Aorta (tissue), 5 donors: ENCODE measurements at regions of chr12 and their contacts with region 1.

Region 1: DNA sequence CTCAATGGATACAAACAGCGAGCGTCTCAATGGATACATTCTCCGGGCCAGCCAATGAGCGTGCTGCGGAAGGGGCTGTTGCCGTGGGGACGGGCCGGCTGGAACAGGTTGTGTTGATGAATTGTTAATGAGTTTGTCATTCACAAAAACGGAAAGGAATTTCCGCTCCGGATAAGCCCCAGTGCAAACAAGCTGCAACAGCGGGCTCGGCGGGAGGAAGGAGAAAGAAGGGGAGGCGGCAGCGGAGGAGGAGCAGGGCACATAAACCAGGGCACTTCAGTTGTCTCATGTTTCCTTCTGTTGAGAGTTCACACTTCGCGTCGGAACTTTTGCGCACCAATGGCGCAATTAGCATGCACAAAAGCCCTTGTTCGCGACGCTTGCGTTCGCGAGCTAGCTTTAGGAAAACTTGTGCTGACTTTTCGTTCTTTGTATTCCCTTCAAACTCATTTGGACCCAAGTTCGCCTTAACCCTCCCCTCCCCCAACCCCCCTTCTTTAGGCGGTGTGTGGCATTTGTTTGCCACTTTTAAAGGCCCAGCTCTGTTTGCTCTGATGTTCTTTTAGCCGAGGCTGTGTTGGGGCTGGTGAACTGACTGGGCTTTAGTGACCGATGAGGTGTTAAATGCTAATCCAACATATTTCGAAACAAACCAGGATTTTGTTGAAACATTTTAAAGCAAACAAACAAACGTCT is at the start of gene DUSP6:
- DNase-seq: peak; percentile 97 to 98
- ATAC-seq: peak; percentile 89
- H3K4me3 ChIP-seq: peak within 1 kb of the TSS; percentile 58 to 99
- H3K27ac ChIP-seq: peak within 1 kb of the TSS; percentile 70 to 91
- H3K4me1 ChIP-seq: peaks cover 0 to 6% of the 10 kb centered on the region in 2 donors
- H3K27me3 ChIP-seq: no peaks in the 10 kb centered on the region
- total RNA-seq, gene DUSP6: 94.6 to 96.8 TPM

Region 2: DNA sequence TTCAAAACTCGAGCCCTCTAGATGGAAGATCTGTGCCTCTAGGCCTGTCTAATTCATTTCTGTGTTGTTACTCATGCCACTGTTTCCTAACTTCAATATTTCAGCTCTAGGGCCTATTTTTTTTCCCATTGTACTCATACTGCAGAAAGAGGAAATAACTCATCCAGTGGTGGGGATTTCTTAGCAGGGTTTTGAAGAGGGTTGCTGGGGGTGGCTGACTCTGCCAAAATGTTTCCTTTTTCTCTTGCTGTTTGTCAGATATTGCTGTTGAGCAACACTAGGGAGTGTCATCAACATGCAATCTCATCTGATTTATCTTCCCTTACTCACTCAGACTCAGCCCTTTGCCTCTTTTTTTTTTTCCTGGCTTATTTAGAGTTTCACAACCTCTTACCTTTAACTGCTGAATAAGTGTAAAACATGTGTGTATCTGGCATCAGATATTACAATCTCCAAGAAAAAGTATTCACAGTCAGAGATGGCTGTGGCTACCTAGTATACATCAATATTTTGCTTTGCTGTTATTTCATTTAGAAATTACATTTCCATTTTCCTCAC is 189.9 kb before region 1 on chr12:
- intact Hi-C with region 1: loop called (anchors 5 kb)
- DNase-seq: peak; percentile 72 to 81
- ATAC-seq: peak; percentile 89
- H3K4me3 ChIP-seq: no peak overlapping the region
- H3K27ac ChIP-seq: no peak overlapping the region
- H3K4me1 ChIP-seq: peaks cover 0 to 2% of the 10 kb centered on the region in 2 donors
- H3K27me3 ChIP-seq: no peaks in the 10 kb centered on the region

Region 3: GRCh38 chr12:89306827-89307473 is 45.7 kb before region 1 on chr12:
- intact Hi-C with region 1: loop called in 1 of 2 experiments (anchors 5 kb)
- DNase-seq: no peak
- ATAC-seq: no peak
- H3K4me3 ChIP-seq: no peak overlapping the region
- H3K27ac ChIP-seq: no peak overlapping the region
- H3K4me1 ChIP-seq: peaks cover 2 to 3% of the 10 kb centered on the region in 2 donors
- H3K27me3 ChIP-seq: no peaks in the 10 kb centered on the region

Region 4: DNA sequence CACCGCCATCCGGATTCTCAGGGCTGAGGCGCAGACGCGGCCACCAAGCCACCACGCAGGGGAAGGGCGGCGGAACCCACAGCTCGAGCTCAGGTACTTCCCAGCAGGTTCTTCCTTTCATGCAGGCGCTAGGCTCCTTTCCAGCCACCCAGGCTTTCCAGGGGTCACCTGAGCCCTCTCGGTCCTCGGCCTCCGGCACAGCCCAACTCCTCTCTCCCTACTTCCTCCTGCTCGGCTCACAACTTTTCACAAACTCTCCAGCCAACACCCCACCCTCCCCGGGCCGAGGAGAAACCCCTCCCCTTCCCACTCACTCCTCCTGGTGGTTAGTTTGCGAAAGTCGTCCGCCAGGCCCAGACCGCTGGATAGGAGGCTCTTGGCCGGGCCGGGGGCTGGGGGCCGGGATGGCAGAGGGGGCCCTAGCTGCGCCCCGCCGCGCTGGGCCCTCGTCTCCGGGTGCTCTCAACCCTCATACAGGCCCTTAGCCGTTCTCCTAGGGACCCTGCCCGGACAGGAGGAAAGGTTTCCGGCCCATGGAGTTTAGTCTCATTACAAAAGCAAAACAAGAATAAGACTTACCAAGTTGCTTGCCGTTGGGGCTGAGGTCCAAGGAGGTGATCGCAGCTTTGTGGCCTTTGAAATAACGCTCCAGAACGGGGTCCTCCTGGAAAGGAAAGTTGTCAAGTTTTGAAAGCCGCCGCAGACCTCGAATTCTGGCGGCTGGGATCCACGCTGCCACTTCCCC is 172.1 kb after region 1 on chr12 and contains the start of gene GALNT4:
- intact Hi-C with region 1: loop called (anchors 5 kb)
- DNase-seq: peak; percentile 93 to 94
- ATAC-seq: peak; percentile 96
- H3K4me3 ChIP-seq: peak within 1 kb of the TSS; percentile 81 to 89
- H3K27ac ChIP-seq: peak within 1 kb of the TSS; percentile 62 to 94
- H3K4me1 ChIP-seq: no peaks in the 10 kb centered on the region
- H3K27me3 ChIP-seq: no peaks in the 10 kb centered on the region
- total RNA-seq, gene GALNT4: 7.4 TPM